ENCODE measurements at regions of chr19 and their contacts with region 1.

Region 1: DNA sequence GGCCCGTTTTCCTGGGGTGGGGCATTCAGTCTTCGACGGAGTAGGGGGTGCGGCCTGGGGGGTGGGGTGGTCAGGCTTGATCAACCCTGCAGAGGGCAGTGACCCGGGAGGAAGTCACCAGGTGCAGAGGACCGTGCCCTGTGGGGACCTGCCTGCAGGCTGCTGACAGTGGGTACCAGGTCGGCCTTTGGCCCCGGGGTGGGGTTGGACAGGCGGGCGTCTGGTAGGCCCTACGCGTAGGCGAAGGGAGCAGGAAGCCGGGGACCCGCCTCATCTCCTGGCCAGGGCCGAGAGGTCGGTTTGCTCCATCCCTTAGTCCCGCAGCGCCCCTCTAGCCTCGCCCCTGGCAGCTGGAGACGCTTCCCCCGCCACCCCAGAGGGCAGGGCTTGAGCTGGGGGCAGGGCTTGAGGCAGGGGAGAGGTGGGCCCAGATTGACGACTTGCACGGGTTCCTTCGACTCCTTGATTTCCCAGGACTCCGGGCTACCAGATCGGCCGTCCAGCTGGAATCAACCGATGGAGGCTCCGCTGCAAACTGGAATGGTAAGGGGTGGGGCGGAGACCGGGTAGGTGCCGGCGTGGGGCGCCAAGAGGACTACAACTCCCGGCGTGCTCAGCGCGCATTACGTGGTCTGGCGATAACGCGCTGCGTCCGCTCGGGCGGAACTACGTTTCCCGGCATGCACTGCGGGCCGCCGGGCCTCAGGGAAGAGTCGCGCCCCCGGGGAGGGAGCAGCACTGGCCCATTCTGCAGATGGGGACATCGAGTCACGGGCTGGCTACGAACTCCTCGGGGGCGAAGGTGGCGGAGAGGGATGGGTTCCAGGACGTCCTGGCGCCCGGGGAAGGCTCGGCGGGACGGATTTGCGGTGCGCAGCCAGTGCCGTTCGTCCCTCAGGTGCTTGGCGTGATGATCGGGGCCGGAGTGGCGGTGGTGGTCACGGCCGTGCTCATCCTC is at the start of gene PNPLA6:
- DNase-seq: peak; percentile 96 to 98
- ATAC-seq: peak; percentile 83 to 92 (median 89)
- H3K4me3 ChIP-seq: peak within 1 kb of the TSS; percentile 74 to 98 (median 90)
- H3K27ac ChIP-seq: peak within 1 kb of the TSS; percentile 67 to 95 (median 91)
- H3K4me1 ChIP-seq: peaks cover 0 to 20% (median 14%) of the 10 kb centered on the region in 9 donors
- H3K27me3 ChIP-seq: no peaks in the 10 kb centered on the region
- CTCF ChIP-seq: no peak
- total RNA-seq, gene PNPLA6: 33.9 to 73.8 (median 41.6) TPM

Region 2: GRCh38 chr19:7550987-7551761 is 15.9 kb after region 1 on chr19:
- intact Hi-C with region 1: loop called in 1 of 10 experiments (anchors 1 kb)
- DNase-seq: peak; percentile 69 to 74
- ATAC-seq: peak; percentile 92 to 96 (median 94)
- H3K4me3 ChIP-seq: peak overlapping the region in 8 of 10 donors; percentile 10 to 45 (median 41)
- H3K27ac ChIP-seq: peak overlapping the region in 1 of 10 donors; percentile 10
- H3K4me1 ChIP-seq: peaks cover 0 to 7% (median 0%) of the 10 kb centered on the region in 9 donors
- H3K27me3 ChIP-seq: no peaks in the 10 kb centered on the region
- CTCF ChIP-seq: no peak

Region 3: GRCh38 chr19:7629347-7630054 is 94.2 kb after region 1 on chr19 and contains the starts of genes PET100 and XAB2:
- intact Hi-C with region 1: loop called in 1 of 10 experiments (anchors 5 kb)
- DNase-seq: peak; percentile 91 to 98
- ATAC-seq: peak; percentile 96 to 99 (median 98)
- H3K4me3 ChIP-seq: peak within 1 kb of the TSS; percentile 71 to 95 (median 88)
- H3K27ac ChIP-seq: peak within 1 kb of the TSS in 9 of 10 donors; percentile 54 to 89 (median 76)
- H3K4me1 ChIP-seq: peaks cover 11 to 39% (median 30%) of the 10 kb centered on the region in 9 donors
- H3K27me3 ChIP-seq: no peaks in the 10 kb centered on the region
- CTCF ChIP-seq: no peak
- total RNA-seq, gene PET100: 119 to 230 (median 150) TPM
- total RNA-seq, gene XAB2: 18.6 to 25.1 (median 22.4) TPM